Astrocyte of the cerebellum (primary cell): ENCODE measurements at regions of chr2 and their contacts with region 1.

Region 1: DNA sequence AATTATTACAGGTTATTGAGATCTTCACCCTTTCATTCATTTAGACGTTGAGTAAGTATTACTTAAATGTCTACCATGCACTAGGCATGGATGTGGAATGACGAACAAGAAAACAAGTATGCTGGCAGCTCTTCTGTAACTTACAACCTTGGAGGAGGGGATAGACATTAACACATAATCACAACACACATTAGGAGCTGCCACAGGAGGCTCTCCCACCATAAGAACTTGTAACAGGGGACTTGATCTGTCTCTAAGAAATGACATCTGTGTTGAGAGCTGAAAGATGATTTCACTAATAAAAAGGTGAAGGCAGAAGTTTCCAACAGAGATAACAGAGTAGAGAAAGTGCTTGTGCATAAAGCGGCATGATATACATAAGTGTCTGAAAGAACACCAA is 384.7 kb upstream of the ZEB2 start:
- DNase-seq: no peak
- H3K4me3 ChIP-seq: no peak overlapping the region
- CTCF ChIP-seq: no peak

Region 2: GRCh38 chr2:145007093-145007959 is 102.7 kb after region 1 on chr2:
- in situ Hi-C with region 1: loop called (anchors 5 kb)
- DNase-seq: peak; percentile 83
- H3K4me3 ChIP-seq: peak overlapping the region; percentile 1
- CTCF ChIP-seq: no peak